ENCODE measurements at regions of chr11 and their contacts with region 1.

Region 1: GRCh38 chr11:20609727-20610707 is 10.6 kb downstream of the SLC6A5 start:
- DNase-seq: peak; percentile 25 to 78 (median 53)
- H3K4me3 ChIP-seq: no peak overlapping the region
- H3K27ac ChIP-seq: no peak overlapping the region
- H3K4me1 ChIP-seq: no peaks in the 10 kb centered on the region
- H3K27me3 ChIP-seq: no peaks in the 10 kb centered on the region
- CTCF ChIP-seq: peak; percentile 34 to 50 (median 37)
- EP300 ChIP-seq: no peak
- POLR2A ChIP-seq: no peak

Region 2: DNA sequence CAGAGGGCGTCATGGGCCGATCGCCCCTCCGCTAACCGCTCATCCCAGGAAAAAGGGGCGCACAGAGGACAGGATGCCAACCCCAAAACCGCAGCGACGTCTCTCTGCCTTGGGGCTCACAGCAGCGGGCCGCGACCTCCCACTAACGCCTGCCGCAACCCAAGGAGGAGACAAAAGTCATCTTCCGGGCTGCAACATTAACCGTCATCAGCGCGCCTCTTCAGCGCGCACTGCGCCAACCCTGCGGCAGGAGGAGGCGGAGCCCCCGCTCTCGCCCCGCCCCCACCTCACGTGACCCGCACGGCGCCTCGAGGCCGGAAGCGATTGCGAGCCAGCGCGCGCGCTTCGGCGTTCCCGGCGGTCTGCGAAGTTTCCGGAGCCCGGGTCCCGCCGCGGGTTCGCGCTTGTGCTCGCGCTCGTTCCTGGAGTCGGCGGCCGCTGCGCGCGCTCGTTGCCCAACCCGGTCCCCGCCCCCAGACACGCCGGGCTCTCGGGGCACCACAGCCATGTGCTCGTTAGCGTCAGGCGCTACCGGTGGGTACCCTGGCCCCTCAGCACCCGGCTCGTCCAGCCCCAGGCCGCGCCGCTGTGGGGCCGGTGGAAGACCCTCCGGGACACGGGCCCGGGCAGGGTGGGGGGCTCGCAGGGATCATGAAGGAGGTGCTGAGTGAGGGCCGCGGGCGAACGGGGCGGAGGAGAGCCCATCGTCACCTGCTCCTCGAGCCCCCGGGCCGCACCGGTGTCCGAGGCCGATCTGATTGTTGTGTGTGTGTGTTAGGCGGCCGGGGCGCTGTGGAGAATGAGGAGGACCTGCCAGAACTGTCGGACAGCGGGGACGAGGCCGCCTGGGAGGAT is 222.5 kb before region 1 on chr11 and contains the start of gene PRMT3:
- intact Hi-C with region 1: loop called in 1 of 4 experiments (anchors 10 kb)
- DNase-seq: peak; percentile 94 to 98 (median 96)
- H3K4me3 ChIP-seq: peak within 1 kb of the TSS; percentile 71
- H3K27ac ChIP-seq: peak within 1 kb of the TSS; percentile 81 to 86
- H3K4me1 ChIP-seq: peaks cover 2% of the 10 kb centered on the region
- H3K27me3 ChIP-seq: no peaks in the 10 kb centered on the region
- CTCF ChIP-seq: peak; percentile 96 to 99 (median 99)
- EP300 ChIP-seq: no peak
- POLR2A ChIP-seq: peak; percentile 91
- total RNA-seq, gene PRMT3: 12.6 to 21.2 (median 15.3) TPM

Region 3: GRCh38 chr11:20407344-20407743 is 202.7 kb before region 1 on chr11:
- intact Hi-C with region 1: loop called in 1 of 4 experiments (anchors 10 kb)
- DNase-seq: no peak
- H3K4me3 ChIP-seq: no peak overlapping the region
- H3K27ac ChIP-seq: no peak overlapping the region
- H3K4me1 ChIP-seq: no peaks in the 10 kb centered on the region
- H3K27me3 ChIP-seq: no peaks in the 10 kb centered on the region
- CTCF ChIP-seq: no peak
- EP300 ChIP-seq: no peak
- POLR2A ChIP-seq: no peak

Region 4: GRCh38 chr11:20790622-20791021 is 180.6 kb after region 1 on chr11:
- intact Hi-C with region 1: no loop called
- DNase-seq: no peak
- H3K4me3 ChIP-seq: no peak overlapping the region
- H3K27ac ChIP-seq: no peak overlapping the region
- H3K4me1 ChIP-seq: no peaks in the 10 kb centered on the region
- H3K27me3 ChIP-seq: no peaks in the 10 kb centered on the region
- CTCF ChIP-seq: no peak
- EP300 ChIP-seq: no peak
- POLR2A ChIP-seq: no peak

Measured in ovary (tissue), 10 donors.